ENCODE measurements at regions of chr2 and their contacts with region 1.

Region 1: DNA sequence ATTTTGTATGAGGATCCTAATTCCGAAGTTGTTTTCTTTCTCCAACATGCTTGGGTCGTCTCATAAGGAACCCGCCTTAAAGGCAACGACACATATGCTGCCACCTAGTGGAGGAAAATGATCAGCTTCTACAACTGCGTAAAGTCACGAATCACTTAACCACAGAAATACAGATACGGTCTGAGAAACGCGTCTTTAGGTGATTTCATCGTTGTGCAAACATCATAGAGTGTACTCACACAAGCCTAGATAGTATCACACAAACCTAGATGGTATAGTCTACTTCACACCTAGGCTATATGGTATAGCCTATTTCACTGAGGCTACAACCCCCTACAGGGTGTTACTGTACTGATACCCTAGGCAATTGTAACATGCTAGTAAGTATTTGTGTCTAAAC is 13.1 kb downstream of the GNLY start:
- DNase-seq: peak; percentile 58
- H3K4me3 ChIP-seq: no peak overlapping the region
- H3K27me3 ChIP-seq: no peaks in the 10 kb centered on the region; the same call in 1 of the 2 replicates
- CTCF ChIP-seq: peak; percentile 85

Region 2: GRCh38 chr2:85635636-85636035 is 71.7 kb before region 1 on chr2:
- CTCF ChIA-PET with region 1: interaction called, 92 read pairs
- POLR2A ChIA-PET with region 1: no interaction called
- DNase-seq: no peak
- H3K4me3 ChIP-seq: no peak overlapping the region
- H3K27me3 ChIP-seq: no peaks in the 10 kb centered on the region
- CTCF ChIP-seq: no peak

Region 3: GRCh38 chr2:85642725-85643124 is 64.6 kb before region 1 on chr2:
- CTCF ChIA-PET with region 1: interaction called, 92 read pairs
- POLR2A ChIA-PET with region 1: no interaction called
- DNase-seq: no peak
- H3K4me3 ChIP-seq: no peak overlapping the region
- H3K27me3 ChIP-seq: no peaks in the 10 kb centered on the region
- CTCF ChIP-seq: no peak

Region 4: GRCh38 chr2:85678794-85679672 is 28.3 kb before region 1 on chr2:
- CTCF ChIA-PET with region 1: interaction called, 49 read pairs
- POLR2A ChIA-PET with region 1: no interaction called
- DNase-seq: no peak
- H3K4me3 ChIP-seq: no peak overlapping the region
- H3K27me3 ChIP-seq: no peaks in the 10 kb centered on the region
- CTCF ChIP-seq: peak; percentile 99

Region 5: DNA sequence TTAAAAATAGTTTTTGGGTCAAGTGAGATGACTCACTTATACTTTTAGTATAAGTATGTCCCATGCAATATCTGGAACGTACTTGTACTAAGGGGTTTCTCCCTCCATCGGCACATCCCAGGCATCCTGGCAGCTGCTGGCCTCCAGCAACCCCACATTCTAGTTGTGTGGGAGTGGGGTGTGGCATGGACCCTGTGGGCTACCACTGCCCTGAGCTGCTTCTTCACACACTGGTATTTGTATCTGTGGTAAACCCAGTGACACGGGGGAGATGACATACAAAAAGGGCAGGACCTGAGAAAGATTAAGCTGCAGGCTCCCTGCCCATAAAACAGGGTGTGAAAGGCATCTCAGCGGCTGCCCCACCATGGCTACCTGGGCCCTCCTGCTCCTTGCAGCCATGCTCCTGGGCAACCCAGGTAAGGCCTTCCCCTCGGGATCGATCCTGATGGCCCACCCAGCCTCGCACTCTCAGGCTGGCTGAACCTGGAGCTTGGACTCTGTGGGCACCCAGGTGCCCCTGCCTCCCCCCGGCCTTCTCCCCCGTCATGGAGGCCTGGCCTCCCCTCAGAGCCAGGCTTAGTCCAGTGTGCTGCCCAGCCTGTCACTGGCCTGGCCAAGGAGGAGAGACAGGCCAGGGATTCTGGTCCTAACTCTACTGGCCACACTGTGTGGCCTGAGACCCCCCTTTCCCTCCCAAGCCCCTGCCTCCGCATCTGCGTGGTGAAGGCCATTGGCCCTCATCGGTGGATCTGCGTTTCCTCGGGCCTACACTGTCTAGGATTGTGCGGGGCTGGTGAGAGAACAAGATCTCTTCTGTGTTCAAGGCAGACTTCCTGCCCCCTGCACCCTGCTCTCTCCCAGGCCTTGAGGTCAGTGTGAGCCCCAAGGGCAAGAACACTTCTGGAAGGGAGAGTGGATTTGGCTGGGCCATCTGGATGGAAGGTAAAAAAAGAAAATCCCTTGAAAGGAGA is 13.0 kb before region 1 on chr2 and contains the start of gene GNLY:
- CTCF ChIA-PET with region 1: interaction called, 10 read pairs
- POLR2A ChIA-PET with region 1: no interaction called
- DNase-seq: no peak
- H3K4me3 ChIP-seq: no peak within 1 kb of the TSS
- H3K27me3 ChIP-seq: peaks cover 4% of the 10 kb centered on the region
- CTCF ChIP-seq: no peak
- polyA plus RNA-seq, gene GNLY: not detected in 2 replicates

Region 6: GRCh38 chr2:85852937-85853498 is 145.7 kb after region 1 on chr2:
- CTCF ChIA-PET with region 1: no interaction called
- POLR2A ChIA-PET with region 1: no interaction called
- DNase-seq: no peak
- H3K4me3 ChIP-seq: no peak overlapping the region
- H3K27me3 ChIP-seq: no peaks in the 10 kb centered on the region
- CTCF ChIP-seq: no peak